Activated CD4-positive, alpha-beta memory T cell treated with anti-CD3 and anti-CD28 coated beads, Interleukin-2, amount 10 ng/mL, durations not matched to agents 7 days and 5 days (primary cell): ENCODE measurements at regions of chr18 and their contacts with region 1.

Region 1: DNA sequence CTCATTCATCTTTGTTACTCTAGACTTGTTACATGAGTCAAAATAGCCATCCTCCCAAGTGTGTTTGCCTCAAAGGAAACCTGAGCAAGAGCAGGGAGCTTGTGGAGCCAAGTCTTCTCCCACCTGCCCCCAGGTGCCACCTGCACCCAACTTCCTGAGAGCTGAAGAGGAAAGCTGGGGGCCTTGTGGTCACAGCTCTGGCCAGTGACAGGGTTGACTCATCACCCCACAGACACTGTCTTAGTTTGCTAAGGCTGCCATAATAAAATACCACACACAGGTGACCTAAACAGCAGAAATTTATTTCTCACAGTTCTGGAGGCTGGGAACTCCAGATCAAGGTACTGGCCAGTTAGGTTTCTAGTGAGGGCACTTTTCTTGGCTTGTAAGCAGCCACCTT is 99.6 kb downstream of the TPGS2 start:
- DNase-seq: no peak
- H3K4me3 Mint-ChIP-seq: no peak overlapping the region
- H3K27ac Mint-ChIP-seq: no peak overlapping the region
- H3K4me1 Mint-ChIP-seq: no peaks in the 10 kb centered on the region
- H3K27me3 Mint-ChIP-seq: peaks cover 6% of the 10 kb centered on the region

Region 2: GRCh38 chr18:36688020-36688965 is 40.9 kb before region 1 on chr18:
- CTCF ChIA-PET with region 1: interaction called, 10 read pairs
- POLR2A ChIA-PET with region 1: no interaction called
- DNase-seq: peak; percentile 58
- H3K4me3 Mint-ChIP-seq: no peak overlapping the region
- H3K27ac Mint-ChIP-seq: no peak overlapping the region
- H3K4me1 Mint-ChIP-seq: no peaks in the 10 kb centered on the region
- H3K27me3 Mint-ChIP-seq: peaks cover 11% of the 10 kb centered on the region